Psoas muscle (tissue), 8 donors: ENCODE measurements at regions of chr20 and their contacts with region 1.

Region 1: DNA sequence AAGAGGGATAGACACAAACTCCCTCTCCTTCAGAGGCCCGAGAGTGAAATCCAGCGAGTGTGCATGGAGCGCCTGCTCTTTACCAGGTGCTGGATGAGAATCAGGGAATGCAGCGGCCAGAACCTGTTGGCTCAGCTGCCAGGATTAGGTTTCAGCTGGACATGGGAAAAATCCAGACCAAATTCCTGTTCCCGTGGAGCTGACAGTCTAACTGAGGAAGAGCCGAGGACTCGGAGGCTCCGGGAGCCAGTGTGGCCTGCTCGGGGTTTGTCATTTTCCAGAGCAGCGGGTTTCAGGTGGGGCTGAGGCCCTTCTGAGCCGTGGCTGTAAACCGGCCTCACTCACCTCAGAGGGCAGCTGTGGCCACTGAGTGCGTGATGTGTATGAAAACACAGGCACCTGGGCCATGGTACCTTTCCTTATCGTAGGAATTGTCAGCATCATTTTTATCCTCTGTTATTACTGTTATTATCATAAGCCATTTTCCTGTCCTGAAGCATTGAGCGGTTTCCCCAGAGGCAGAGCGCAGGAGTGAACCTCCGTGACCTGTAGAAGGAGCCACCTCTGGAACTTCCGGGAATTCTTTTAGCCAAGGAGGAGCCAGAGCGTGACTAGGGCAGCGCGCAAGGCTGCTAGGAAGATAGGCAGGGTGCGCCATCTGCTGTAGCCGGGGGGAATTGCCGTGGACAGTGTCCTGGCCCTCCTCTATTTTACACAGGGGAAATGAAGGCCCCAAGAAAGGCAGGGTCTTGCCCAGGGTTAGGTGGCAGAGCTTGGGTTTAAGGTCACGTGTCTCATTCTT is 27.3 kb downstream of the PKIG start:
- DNase-seq: peak; percentile 88 to 93
- ATAC-seq: peak; percentile 93 to 96 (median 93)
- H3K4me3 ChIP-seq: peak overlapping the region; percentile 59
- H3K27ac ChIP-seq: peak overlapping the region; percentile 88
- H3K4me1 ChIP-seq: peaks cover 44% of the 10 kb centered on the region
- H3K27me3 ChIP-seq: no peaks in the 10 kb centered on the region
- CTCF ChIP-seq: peak; percentile 96

Region 2: GRCh38 chr20:44217342-44218092 is 392.2 kb before region 1 on chr20:
- intact Hi-C with region 1: loop called in 1 of 2 experiments (anchors 5 kb)
- DNase-seq: peak; percentile 53 to 78
- ATAC-seq: peak; percentile 85 to 95 (median 90)
- H3K4me3 ChIP-seq: peak overlapping the region; percentile 13
- H3K27ac ChIP-seq: no peak overlapping the region
- H3K4me1 ChIP-seq: peaks cover 7% of the 10 kb centered on the region
- H3K27me3 ChIP-seq: no peaks in the 10 kb centered on the region
- CTCF ChIP-seq: peak; percentile 93

Region 3: GRCh38 chr20:44388466-44389023 is 221.2 kb before region 1 on chr20:
- intact Hi-C with region 1: loop called in 1 of 2 experiments (anchors 5 kb)
- DNase-seq: peak; percentile 67 to 85
- ATAC-seq: peak; percentile 64 to 84 (median 83)
- H3K4me3 ChIP-seq: no peak overlapping the region
- H3K27ac ChIP-seq: no peak overlapping the region
- H3K4me1 ChIP-seq: no peaks in the 10 kb centered on the region
- H3K27me3 ChIP-seq: peaks cover 0 to 41% (median 0%) of the 10 kb centered on the region in 3 donors
- CTCF ChIP-seq: peak; percentile 61

Region 4: DNA sequence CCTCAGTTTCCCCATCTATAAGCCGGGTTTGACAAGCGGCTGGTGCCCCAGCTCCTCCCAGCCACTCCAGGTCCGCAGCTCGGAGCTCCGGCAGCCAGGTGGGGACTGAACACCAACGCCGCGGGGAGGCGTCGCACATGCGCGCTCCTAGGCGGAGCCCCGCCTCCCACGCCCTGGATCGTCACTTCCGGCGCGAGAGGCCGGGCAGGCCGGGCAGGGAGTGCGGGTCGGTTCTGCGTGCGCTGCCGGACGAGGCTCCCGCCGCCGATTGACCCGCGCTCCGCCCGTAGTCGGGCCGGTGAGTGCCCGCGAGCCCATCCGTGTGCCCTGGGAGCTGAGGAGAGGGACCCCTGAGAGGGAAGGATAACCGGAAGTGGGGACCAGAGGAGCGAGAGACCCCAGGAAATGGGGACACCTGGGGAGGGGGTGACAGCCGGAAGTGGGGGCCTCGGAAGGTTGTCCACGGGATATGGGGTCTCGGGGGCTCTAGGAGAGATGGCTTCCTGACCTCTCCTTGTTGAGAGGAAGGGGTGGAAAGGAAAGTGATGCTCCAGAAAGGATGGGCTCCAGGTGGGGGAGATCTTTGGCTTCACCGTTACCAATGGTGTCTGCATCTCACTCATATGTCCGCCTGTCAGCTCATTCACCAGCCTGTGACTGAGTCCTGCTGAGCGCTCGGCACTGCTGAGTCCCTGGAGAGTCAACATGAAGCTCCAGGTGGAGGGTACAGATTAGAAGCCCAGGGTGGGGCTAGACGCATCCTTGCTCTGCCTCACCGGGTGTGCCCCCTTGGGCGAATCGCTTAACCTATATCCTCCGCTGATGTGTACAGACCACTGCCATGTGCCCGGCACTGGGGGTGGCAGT is 133.8 kb before region 1 on chr20 and contains the start of gene TTPAL:
- intact Hi-C with region 1: loop called in 1 of 2 experiments (anchors 1 kb)
- DNase-seq: peak; percentile 90 to 93
- ATAC-seq: peak; percentile 96 to 98 (median 98)
- H3K4me3 ChIP-seq: peak within 1 kb of the TSS; percentile 90
- H3K27ac ChIP-seq: peak within 1 kb of the TSS; percentile 95
- H3K4me1 ChIP-seq: peaks cover 18% of the 10 kb centered on the region
- H3K27me3 ChIP-seq: no peaks in the 10 kb centered on the region
- CTCF ChIP-seq: peak; percentile 41
- total RNA-seq, gene TTPAL: 3.2 to 8.4 (median 5.4) TPM

Region 5: DNA sequence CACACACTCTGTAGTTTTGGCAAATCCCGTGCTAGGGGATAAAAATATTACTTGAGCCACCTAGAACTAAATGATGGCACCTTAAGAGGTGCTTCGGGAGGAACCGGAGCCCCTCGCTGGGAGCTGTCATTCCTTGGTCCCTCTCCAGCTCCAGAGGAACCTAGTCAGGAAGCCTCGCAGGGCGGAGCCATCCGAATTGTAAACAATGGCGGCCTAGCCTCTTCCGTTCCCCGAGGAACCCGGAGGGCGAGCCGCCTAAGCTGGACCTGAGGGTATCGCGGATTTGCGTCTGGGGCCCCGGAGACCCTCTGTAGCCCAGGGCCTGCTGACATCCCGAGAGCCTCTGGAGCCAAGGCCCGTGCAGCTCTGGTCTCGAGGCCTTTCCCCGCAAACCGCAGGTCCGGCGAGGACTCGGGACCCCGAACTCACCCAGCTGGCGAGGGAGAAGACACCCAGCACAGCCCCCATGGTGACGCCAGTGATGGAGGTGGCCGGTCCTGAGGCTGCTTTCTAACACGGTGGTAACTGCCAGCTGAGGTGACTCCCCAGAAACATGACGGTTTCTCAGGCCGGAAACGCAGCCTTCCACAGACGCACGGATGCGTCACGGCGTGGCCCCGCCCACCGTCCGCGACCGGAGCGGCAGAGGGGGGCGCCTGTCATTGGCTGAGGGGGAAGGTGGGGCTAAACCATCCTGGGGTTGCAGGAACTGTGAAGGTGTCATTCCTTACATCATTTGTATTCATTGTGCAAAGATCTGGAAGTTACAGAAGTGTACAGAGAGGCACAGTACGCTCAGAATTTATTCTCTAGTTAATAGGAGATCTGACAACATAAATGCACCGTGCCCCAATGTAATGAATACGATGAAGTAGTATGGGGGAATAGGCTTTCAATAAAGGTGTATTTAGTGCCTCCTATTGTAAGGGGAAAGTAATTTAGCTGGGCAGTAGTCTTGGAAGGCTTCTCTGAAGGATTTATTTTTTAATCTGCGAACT is 87.9 kb before region 1 on chr20 and contains the start of gene SERINC3:
- intact Hi-C with region 1: loop called in 1 of 2 experiments (anchors 5 kb)
- DNase-seq: peak; percentile 97 to 98
- ATAC-seq: peak; percentile 99
- H3K4me3 ChIP-seq: peak within 1 kb of the TSS; percentile 99
- H3K27ac ChIP-seq: peak within 1 kb of the TSS; percentile 100
- H3K4me1 ChIP-seq: peaks cover 42% of the 10 kb centered on the region
- H3K27me3 ChIP-seq: no peaks in the 10 kb centered on the region
- CTCF ChIP-seq: peak; percentile 6
- total RNA-seq, gene SERINC3: 89.5 to 104 (median 97.8) TPM

Region 6: DNA sequence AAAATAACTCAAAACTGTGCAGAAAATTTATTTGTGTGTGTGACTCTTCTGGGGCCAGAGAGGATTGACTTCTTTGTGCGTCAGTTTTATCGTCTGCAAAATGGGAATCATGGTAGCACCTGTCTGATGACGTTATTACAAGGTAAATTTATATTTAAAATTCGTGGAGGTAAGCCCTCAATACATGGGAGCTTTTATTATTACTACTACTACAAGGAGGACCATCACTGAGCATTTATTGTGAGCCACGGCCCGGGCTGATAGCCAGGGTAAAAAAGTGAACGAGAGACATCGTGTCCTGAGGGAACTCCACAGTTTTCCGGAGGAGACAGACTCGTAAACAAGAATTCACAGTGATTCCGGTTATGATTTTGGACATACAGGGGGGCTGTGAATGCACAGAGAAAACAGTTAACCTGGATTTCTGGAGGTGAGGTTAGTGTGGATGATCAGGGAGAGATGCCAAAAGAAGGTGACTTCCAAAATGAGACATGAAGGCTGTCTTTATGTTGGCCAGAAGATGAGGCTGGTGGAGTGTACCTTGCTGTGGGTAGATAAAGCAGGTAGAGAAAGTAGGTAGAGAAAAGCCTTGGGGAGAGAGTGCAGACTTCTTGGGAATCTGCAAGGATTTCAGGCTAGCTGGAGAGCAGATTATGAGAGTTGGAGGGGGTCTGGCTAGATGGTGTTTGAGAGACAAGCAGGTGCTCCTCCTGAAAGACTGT is 77.3 kb before region 1 on chr20:
- intact Hi-C with region 1: loop called in 1 of 2 experiments (anchors 1 kb)
- DNase-seq: no peak
- ATAC-seq: peak in 2 of 4 donors; percentile 13 to 21
- H3K4me3 ChIP-seq: peak overlapping the region; percentile 88
- H3K27ac ChIP-seq: peak overlapping the region; percentile 79
- H3K4me1 ChIP-seq: peaks cover 2% of the 10 kb centered on the region
- H3K27me3 ChIP-seq: no peaks in the 10 kb centered on the region
- CTCF ChIP-seq: no peak

Region 7: DNA sequence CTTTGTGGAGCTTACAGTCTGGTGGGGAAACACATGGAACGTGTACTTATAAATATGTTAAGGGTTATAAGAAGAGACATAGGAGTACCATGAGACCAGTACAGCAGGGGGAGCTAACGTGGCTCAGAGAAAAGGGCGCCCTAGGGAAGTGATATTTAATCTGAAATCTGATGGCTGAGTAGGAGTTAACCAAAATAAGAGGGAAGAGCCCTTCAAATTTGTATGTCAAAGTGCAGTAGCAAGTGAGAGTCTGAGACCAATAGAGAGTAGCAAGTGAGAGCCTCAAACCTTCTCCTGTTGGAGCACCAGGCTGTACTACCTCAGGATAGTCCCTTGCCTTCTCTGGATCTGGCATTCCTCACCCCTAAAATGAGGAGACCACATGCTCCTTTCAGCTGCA is 33.4 kb before region 1 on chr20:
- intact Hi-C with region 1: loop called (anchors 5 kb)
- DNase-seq: no peak
- ATAC-seq: peak in 1 of 4 donors; percentile 0
- H3K4me3 ChIP-seq: no peak overlapping the region
- H3K27ac ChIP-seq: peak overlapping the region; percentile 96
- H3K4me1 ChIP-seq: peaks cover 70% of the 10 kb centered on the region
- H3K27me3 ChIP-seq: no peaks in the 10 kb centered on the region
- CTCF ChIP-seq: peak; percentile 46